Activated CD4-positive, alpha-beta T cell treated with anti-CD3 and anti-CD28 coated beads, Interleukin-2, amount 10 ng/mL, durations not matched to agents 24 days and 14 days (primary cell): ENCODE measurements at regions of chr18 and their contacts with region 1.

Region 1: DNA sequence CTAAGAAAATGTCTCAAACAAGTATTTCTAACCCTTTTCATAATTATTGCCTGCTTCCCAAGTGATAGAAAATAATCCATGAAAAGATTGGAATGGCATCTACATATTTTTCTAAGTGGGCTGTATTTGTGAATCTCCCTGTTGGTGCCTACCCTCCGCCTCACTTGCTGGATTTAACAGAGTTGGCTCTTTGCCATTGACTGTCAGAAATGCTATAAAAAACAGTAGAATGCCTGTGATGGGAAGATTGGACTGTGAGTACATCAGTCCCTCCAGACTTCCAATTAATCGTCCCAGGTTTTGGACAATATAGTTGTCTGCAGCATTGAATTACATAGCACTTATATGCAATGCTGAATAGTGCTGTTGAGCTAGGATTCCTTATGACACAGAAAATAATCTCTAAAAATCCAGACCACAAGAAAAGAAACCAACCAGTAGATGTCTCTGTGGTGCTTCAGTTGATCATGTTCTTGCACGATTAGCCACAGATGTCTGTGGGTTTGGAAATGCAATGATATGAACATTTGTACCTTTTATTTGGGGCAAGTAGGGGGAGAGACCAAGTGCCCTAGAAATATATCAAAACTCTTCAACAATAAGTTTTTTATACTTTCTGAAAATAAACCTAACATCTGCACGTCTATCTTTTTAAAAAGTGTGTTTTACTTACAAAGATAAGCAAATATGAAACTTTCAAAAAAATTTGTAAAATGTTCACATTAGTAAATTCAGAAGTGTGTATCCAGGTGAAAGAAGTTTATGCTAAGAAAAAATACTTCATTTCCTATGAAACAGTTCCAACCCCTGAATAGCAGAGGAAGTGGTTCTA is 88.5 kb downstream of the DYNAP start:
- DNase-seq: peak; percentile 73
- H3K4me3 Mint-ChIP-seq: no peak overlapping the region
- H3K27ac Mint-ChIP-seq: no peak overlapping the region
- H3K4me1 Mint-ChIP-seq: peaks cover 4% of the 10 kb centered on the region
- H3K27me3 Mint-ChIP-seq: peaks cover 27% of the 10 kb centered on the region

Region 2: DNA sequence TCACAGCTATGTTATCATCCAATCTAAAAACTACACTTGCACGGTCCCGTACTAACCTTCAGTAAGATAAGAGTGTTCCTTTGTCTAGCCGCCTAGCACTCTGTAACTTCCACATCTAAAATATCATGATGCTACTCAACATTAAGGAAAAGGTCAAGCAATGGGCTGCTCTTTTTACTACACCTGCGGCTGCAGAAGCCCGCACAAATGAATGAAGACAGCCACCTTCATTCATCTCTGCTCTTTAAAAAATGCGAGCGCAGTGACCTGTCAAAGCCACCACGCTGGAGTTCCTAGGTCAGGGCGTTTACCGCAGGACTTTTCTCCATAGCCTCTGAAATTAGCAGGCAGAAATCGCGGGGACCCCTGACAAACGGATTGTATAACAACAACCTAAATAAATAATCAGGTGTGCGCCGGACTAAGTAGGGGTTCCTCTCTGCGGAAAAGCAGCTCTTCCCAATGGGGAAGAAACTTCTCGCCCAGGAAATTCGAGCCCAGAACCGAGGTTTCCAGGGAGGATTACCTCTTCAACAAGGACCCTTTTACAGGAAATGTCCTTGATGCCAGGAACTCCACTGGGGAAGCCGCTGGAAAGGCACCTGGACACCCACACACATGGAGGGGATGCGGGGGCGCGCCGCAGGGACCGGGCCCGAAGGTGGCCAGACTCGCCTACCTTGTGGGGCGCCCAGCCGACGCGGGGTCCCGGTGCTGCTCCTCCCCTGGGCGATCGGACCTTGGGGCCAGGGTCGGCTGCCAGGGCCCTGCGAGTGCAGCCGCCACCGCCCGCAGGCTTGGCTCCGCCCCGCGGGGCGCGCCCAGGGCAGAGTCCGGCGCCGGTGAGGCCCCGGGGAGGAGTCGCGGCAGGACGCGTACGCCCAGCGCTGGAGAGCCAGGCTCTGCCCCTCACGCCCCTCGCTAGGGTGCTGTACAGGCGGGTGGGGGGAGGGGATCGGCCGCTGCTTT is 279.4 kb after region 1 on chr18 and contains the start of gene CCDC68:
- intact Hi-C with region 1: loop called (anchors 10 kb)
- DNase-seq: no peak
- H3K4me3 Mint-ChIP-seq: peak within 1 kb of the TSS; percentile 39
- H3K27ac Mint-ChIP-seq: no peak within 1 kb of the TSS
- H3K4me1 Mint-ChIP-seq: no peaks in the 10 kb centered on the region
- H3K27me3 Mint-ChIP-seq: peaks cover 56% of the 10 kb centered on the region
- total RNA-seq, gene CCDC68: not detected in 2 replicates